H1 (cell line): ENCODE measurements at regions of chr14 and their contacts with region 1.

Region 1: DNA sequence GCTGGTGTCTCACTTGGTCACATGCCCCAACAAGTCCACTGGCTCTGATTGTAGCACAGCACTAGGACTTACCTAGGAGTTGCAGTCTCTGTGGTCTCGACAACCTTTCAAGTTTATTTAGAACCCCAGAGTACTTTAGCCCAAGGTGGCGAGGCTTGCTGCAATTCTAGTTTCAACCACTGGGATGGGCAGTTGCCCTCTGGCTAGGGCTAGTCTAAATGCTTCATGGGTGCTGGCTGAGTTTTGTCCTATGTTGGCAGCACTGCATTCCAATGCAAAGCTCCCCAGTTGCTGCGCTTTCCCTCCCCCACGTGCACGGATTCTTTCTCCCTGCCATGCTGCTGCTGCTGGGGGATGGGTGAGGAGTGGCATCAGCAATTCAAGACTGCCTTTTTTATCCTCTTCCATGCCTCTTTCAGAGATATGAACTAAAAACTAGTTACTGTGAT is 207.9 kb downstream of the SYNE2 start:
- DNase-seq: peak; percentile 82 to 85
- H3K4me3 ChIP-seq: peak overlapping the region in 1 of 4 experiments; percentile 5; a peak in 1 of 8 replicates
- H3K27ac ChIP-seq: peak overlapping the region; percentile 57
- H3K4me1 ChIP-seq: peaks cover 0 to 12% (median 5%) of the 10 kb centered on the region in 4 experiments; a peak in 3 of 7 replicates
- H3K27me3 ChIP-seq: no peaks in the 10 kb centered on the region
- CTCF ChIP-seq: peak; percentile 60 to 92 (median 79)
- EP300 ChIP-seq: peak; percentile 64 to 91; a peak in 2 of 3 replicates
- POLR2A ChIP-seq: no peak
- RAD21 ChIP-seq: peak; percentile 81 to 84

Region 2: DNA sequence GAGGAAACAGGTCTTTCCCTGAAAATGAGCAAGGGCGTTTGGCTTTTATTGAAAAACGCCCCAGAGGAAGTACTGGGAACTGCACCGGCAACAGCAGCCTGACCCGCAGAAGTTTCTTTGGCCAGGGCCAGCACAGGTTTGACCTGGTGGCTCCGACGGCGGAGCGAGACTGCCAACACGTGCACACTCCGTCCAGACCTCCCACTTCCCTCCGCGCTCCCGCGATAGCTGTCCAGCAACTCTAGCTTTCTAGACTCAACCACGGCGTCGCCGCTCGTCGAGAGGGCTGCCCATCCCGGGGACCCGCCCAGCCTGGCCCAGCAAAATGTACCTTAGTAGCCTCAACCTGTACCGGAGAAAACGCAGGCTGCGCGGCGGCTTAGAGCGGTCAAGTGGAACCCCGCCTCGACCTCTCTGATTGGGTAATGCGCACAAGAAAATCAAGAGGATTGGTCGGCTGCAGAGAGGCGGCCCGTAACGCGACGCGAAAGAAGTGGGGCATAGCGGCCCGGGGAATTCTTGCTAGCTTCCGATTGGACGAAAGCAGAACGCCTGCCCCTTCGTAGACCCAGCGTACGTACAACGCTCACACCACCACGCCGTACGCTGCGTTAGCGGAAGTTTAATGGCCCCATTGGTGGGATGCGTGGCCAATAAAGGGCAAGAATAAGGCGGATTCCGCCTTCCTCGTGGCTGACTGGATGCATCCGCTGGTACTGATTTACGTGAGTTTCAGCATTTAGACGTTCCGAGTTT is 419.0 kb before region 1 on chr14 and contains the start of gene WDR89:
- CTCF ChIA-PET with region 1: no interaction called
- POLR2A ChIA-PET with region 1: no interaction called
- DNase-seq: peak; percentile 94 to 98
- H3K4me3 ChIP-seq: peak within 1 kb of the TSS; percentile 66 to 92 (median 83)
- H3K27ac ChIP-seq: peak within 1 kb of the TSS; percentile 97
- H3K4me1 ChIP-seq: no peaks in the 10 kb centered on the region; a peak in 1 of 7 replicates
- H3K27me3 ChIP-seq: no peaks in the 10 kb centered on the region
- CTCF ChIP-seq: peak; percentile 42 to 85 (median 71); a peak in 3 of 4 replicates
- EP300 ChIP-seq: 0 out of 3 replicates have a peak, but pooled peaks of 1 of the 2 experiments have one; percentile 17
- POLR2A ChIP-seq: peak; percentile 78 to 93
- RAD21 ChIP-seq: peak; percentile 48 to 50
- total RNA-seq, gene WDR89: 32.0 and 32.9 TPM in 2 replicates

Region 3: DNA sequence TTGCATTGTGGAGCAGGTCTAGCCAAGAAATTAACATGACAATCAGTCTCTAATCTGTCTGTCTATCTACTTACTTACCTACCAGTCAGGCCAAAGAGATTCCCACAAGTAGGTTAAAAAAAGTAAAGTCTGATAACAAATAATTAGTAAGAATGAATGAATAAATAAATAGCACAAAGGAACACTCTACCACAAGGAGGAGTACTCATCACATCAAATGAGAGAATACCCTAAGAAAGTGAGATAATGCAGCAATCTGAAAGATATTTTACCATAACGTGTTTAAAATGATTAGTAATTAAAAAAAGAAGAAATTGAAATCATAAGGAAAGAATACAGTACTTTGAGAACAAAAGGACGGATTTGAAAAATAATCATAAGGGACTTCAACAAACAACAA is 20.6 kb before region 1 on chr14:
- CTCF ChIA-PET with region 1: interaction called, 11 read pairs
- POLR2A ChIA-PET with region 1: no interaction called
- DNase-seq: no peak
- H3K4me3 ChIP-seq: no peak overlapping the region
- H3K27ac ChIP-seq: no peak overlapping the region
- H3K4me1 ChIP-seq: no peaks in the 10 kb centered on the region
- H3K27me3 ChIP-seq: no peaks in the 10 kb centered on the region
- CTCF ChIP-seq: peak in 1 of 3 experiments; percentile 21; a peak in 1 of 4 replicates
- EP300 ChIP-seq: no peak
- POLR2A ChIP-seq: no peak
- RAD21 ChIP-seq: peak in 1 of 2 experiments; percentile 34; a peak in 3 of 4 replicates

Region 4: GRCh38 chr14:64137657-64138290 is 77.1 kb after region 1 on chr14:
- CTCF ChIA-PET with region 1: interaction called, 10 read pairs
- POLR2A ChIA-PET with region 1: no interaction called
- DNase-seq: no peak
- H3K4me3 ChIP-seq: no peak overlapping the region
- H3K27ac ChIP-seq: no peak overlapping the region
- H3K4me1 ChIP-seq: no peaks in the 10 kb centered on the region; a peak in 1 of 7 replicates
- H3K27me3 ChIP-seq: no peaks in the 10 kb centered on the region
- CTCF ChIP-seq: peak; percentile 10 to 52 (median 39)
- EP300 ChIP-seq: no peak
- POLR2A ChIP-seq: no peak
- RAD21 ChIP-seq: peak; percentile 67 to 69